ENCODE measurements at regions of chr6 and their contacts with region 1.

Region 1: GRCh38 chr6:116667623-116668022 is 943 bp downstream of the ZUP1 start:
- DNase-seq: no peak
- H3K4me3 Mint-ChIP-seq: peak overlapping the region; percentile 99
- H3K27ac Mint-ChIP-seq: peak overlapping the region; percentile 12
- H3K4me1 Mint-ChIP-seq: peaks cover 35% of the 10 kb centered on the region
- H3K27me3 Mint-ChIP-seq: no peaks in the 10 kb centered on the region

Region 2: DNA sequence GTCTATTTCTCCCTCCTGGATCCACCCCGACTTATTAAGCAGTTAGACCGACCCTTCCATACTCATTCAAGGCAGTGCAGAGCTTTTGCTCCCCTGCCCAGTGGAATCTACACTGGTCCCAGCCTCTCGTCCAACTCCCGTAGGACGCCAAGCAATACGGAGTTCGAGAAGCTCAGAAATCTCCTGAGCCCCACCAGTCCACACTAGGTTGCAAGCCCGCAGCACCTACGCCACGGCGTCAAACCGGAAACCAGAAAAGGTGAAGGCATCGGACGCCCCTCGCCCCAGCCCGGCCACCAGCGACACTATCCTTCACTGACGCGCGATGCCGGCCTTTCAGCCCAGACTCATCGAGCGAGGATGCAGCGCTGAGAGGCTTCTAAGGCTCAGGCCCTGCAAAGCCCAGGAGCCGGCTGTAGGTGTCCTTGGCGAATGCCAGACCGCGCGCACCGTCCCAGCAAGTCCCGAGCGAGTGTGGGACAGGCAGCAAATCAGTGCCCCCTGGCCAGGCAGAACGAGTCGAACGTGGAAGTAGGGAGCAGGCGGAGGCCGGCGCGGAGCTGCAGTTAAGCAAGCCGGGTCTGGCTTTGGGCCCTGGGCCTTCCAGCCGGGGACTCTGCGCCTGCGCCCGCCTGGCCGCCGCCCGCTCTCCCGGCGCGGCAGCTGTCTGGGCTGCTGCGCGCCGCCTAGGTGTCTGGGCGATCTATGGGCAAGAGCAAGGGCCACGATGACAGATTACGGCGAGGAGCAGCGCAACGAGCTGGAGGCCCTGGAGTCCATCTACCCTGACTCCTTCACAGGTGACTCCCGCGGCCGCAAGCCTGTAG is 96.6 kb before region 1 on chr6 and contains the start of gene RWDD1:
- CTCF ChIA-PET with region 1: interaction called, 3 read pairs
- intact Hi-C with region 1: loop called (anchors 1 kb)
- DNase-seq: peak; percentile 99
- H3K4me3 Mint-ChIP-seq: peak within 1 kb of the TSS; percentile 93
- H3K27ac Mint-ChIP-seq: peak within 1 kb of the TSS; percentile 88
- H3K4me1 Mint-ChIP-seq: peaks cover 49% of the 10 kb centered on the region
- H3K27me3 Mint-ChIP-seq: no peaks in the 10 kb centered on the region
- total RNA-seq, gene RWDD1: 47.8 to 50.3 TPM

Region 3: DNA sequence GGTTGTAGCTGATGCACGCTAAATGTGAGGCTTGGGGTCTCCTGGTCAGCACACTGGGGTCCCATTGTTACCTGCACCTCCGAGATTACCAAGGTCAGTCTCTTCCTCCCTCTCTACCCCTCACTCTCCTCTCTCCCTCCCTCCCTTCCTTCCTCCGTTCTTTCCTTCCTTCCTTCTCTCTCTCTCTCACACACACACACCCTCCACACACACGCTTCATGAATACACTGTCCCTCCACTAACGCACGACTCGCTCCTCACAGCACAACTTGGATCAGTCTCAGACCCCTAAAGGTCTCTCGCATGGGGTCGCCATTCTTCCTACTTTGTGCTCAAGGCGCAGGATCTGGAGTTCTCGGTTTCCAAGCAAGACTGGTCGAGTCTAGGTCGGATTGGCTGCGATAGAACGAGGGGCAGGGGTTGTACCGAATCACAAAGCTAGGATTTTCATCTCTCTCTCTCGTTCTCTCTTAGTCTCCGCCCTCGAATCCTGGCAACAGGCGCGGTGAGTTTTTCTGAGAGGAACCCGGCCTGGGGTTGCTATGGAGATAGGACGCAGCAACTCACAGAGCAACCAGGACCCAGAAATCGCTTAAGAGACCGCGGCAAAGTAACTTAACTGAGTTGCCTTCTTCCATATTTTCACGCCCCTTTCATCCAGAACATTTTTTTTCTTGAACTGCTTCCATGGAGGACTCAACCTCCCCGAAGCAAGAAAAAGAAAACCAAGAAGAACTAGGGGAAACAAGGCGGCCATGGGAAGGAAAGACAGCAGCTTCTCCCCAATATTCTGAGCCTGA is 51.5 kb before region 1 on chr6 and contains the start of gene RSPH4A:
- CTCF ChIA-PET with region 1: no interaction called
- intact Hi-C with region 1: loop called (anchors 1 kb)
- DNase-seq: peak; percentile 85
- H3K4me3 Mint-ChIP-seq: peak within 1 kb of the TSS; percentile 82
- H3K27ac Mint-ChIP-seq: no peak within 1 kb of the TSS
- H3K4me1 Mint-ChIP-seq: peaks cover 12% of the 10 kb centered on the region
- H3K27me3 Mint-ChIP-seq: peaks cover 11% of the 10 kb centered on the region
- total RNA-seq, gene RSPH4A: not detected

Region 4: DNA sequence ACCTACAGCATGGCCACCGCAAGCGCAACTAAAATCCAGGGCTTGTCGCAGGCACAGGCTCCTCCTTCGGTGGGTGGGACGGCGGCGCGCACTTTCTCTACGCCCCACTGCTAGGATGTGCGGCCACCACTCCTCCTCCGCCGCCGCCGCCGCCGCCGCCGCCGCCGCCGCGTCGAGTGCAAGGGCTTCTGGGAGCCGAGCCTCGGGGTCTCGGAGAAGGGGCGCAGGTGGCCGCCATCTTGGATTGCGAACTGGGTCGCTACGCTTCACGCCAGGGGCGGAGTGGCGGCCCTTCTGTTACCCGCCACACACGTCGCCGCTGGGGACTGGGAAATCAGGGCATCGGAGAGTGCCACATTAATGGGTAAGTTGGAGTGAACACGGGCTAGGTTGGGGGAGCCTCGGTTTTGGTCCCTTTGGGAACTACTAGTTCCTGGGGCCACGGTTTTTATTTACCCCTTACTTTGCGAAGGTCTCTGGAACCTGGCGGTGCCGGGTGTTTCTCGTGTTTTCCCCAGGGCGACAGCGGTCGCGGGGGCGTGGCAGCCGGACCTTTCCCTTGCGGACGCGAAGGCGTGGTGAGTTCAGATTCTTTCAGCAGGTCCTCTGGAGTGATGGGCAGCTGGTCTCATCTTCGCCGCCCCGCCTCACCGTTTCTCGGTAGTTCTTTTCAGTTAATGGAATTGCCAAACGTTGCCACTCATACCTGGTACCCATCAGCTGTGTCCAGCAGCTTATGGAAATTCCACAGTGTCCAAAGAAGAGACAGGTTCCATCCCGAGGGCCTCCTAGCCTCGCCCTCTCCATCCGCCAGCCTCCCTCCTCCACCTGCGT is 13.6 kb after region 1 on chr6 and contains the start of gene KPNA5:
- CTCF ChIA-PET with region 1: interaction called, 3 read pairs
- intact Hi-C with region 1: loop called (anchors 1 kb)
- DNase-seq: peak; percentile 94
- H3K4me3 Mint-ChIP-seq: peak within 1 kb of the TSS; percentile 96
- H3K27ac Mint-ChIP-seq: peak within 1 kb of the TSS; percentile 97
- H3K4me1 Mint-ChIP-seq: peaks cover 43% of the 10 kb centered on the region
- H3K27me3 Mint-ChIP-seq: no peaks in the 10 kb centered on the region
- total RNA-seq, gene KPNA5: 8.4 to 8.9 TPM

Region 5: GRCh38 chr6:116695401-116695800 is 27.8 kb after region 1 on chr6:
- CTCF ChIA-PET with region 1: interaction called, 3 read pairs
- intact Hi-C with region 1: loop called (anchors 1 kb)
- DNase-seq: no peak
- H3K4me3 Mint-ChIP-seq: no peak overlapping the region
- H3K27ac Mint-ChIP-seq: no peak overlapping the region
- H3K4me1 Mint-ChIP-seq: peaks cover 39% of the 10 kb centered on the region
- H3K27me3 Mint-ChIP-seq: no peaks in the 10 kb centered on the region